HEK293 (cell line): ENCODE measurements at regions of chr17 and their contacts with region 1.

Region 1: GRCh38 chr17:39547713-39548478 is 59.8 kb downstream of the NEUROD2 start:
- H3K4me3 ChIP-seq: no peak overlapping the region
- H3K27ac ChIP-seq: no peak overlapping the region
- H3K4me1 ChIP-seq: no peaks in the 10 kb centered on the region
- CTCF ChIP-seq: peak; percentile 95

Region 2: DNA sequence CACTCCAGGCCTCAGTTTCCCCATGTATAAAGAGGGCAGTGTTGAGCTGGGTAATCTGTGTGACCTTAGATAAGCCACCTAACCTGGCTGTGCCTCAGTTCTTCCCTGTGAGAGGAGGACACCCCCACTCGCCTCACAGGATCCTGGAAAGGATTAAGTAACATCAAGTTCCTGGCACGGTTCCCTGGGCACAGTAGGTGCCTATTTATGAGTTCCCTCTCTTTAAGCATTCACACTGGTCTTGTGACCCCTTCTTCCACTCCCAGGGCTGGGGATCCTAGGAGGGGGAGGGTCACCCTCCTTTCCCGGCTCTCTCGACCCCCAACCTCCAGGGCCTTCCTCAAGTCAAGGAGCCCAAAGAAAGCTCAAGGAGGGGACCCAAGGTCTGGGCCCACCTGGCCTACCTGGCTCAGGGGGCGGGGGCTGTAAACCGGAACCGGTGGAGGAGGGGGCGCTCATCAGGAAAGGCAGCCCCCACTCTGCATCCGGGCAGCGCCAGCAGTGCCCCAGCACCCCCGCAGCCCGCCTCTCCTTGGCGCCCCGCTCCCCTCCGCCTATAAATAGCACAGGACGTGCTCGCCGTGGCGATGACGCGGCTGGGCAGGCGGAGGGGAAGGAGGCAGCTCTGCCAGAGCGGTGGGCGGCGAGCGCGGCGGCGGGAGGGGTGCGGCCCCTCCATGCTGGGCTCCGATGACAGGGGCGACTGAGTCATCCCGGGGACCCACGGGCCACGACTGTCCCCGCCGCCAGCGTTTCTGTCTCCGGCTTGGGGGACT is 338.4 kb before region 1 on chr17:
- CTCF ChIA-PET with region 1: interaction called, 11 read pairs
- POLR2A ChIA-PET with region 1: no interaction called
- H3K4me3 ChIP-seq: peak overlapping the region; percentile 13
- H3K27ac ChIP-seq: peak overlapping the region; percentile 28; the same call in 1 of the 2 replicates
- H3K4me1 ChIP-seq: peaks cover 16% of the 10 kb centered on the region
- CTCF ChIP-seq: no peak

Region 3: DNA sequence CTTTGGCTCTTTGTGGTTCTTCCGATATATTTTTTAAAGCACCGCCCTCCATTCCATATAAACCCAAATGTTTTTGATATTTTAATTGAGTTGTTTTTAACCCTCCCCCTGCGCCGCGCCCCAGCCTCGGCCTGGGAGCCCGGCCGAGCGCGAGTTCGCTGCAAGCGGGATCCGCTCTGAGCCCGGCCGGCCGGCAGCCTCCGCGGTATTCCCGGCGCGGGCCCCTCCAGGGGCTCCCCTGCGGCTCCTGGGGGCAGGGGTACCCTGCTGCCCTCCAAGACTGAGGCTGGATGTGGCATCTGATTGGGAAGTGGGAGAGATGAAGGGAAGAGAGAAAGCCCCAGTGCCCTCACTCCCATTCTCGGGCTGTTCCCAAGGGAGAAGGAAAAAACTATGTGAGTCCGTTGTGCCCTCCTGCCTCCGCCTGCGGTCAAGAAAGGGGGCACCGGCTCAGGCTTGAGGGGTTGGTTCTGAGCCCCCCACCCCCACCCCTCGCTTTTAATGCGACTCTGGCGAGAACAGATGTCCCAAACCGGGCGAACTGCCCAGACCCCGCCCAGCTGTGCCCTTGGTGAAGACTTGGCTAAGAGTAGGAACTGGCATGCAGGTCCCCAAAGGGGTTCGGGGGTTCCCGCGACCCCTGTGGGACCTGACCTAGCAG is 51.2 kb after region 1 on chr17:
- CTCF ChIA-PET with region 1: interaction called, 11 read pairs
- POLR2A ChIA-PET with region 1: no interaction called
- H3K4me3 ChIP-seq: no peak overlapping the region
- H3K27ac ChIP-seq: no peak overlapping the region
- H3K4me1 ChIP-seq: peaks cover 4% of the 10 kb centered on the region; the same call in 1 of the 2 replicates
- CTCF ChIP-seq: no peak

Region 4: GRCh38 chr17:39653662-39654331 is 105.9 kb after region 1 on chr17:
- CTCF ChIA-PET with region 1: interaction called, 28 read pairs
- POLR2A ChIA-PET with region 1: no interaction called
- H3K4me3 ChIP-seq: no peak overlapping the region
- H3K27ac ChIP-seq: no peak overlapping the region
- H3K4me1 ChIP-seq: peaks cover 2% of the 10 kb centered on the region; the same call in 1 of the 2 replicates
- CTCF ChIP-seq: peak; percentile 64

Region 5: GRCh38 chr17:39716879-39717536 is 169.1 kb after region 1 on chr17:
- CTCF ChIA-PET with region 1: no interaction called
- POLR2A ChIA-PET with region 1: no interaction called
- H3K4me3 ChIP-seq: no peak overlapping the region
- H3K27ac ChIP-seq: no peak overlapping the region
- H3K4me1 ChIP-seq: no peaks in the 10 kb centered on the region
- CTCF ChIP-seq: no peak

Region 6: DNA sequence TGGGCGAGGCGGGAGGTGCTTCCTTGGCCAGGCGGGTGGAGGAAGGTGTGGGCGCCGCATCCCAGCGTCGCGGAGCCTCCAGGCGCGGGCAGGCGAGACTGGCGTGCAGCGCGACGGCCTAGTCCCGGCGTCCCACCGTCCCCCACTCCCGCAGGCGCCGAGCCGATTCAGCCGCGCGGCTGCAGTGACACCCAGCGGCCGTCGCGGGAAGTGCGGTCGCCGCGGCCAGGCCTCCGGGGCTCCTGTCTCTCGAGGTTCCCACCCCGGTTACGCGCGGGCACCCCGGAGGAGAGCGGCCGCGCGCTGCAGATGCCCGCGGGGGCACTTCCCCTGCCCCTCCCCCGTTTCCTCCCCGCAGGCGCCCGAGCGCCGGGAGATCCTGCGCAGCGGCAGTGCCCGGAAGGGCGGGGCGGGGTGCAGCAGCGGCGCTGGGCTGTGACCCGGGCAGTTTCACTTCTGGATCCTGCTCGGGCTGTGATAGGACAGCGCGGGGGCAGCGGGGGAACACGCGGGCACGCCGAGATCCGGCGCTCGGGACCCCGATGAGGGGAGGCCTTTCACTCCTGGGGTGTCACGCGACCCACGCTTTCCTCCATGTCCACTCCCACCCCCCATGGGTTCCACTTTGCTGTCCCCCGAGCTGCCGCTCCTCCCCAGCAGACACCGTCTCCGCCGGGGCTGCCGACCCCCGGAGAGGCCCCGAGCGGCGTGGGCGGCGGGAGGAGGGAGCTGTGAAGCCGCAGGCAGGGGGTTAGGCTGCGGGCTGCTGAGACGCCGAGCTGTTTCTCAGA is 206.5 kb after region 1 on chr17:
- CTCF ChIA-PET with region 1: interaction called, 12 read pairs
- POLR2A ChIA-PET with region 1: interaction called, 4 read pairs
- H3K4me3 ChIP-seq: peak overlapping the region; percentile 50
- H3K27ac ChIP-seq: peak overlapping the region; percentile 87
- H3K4me1 ChIP-seq: peaks cover 4% of the 10 kb centered on the region; the same call in 1 of the 2 replicates
- CTCF ChIP-seq: peak; percentile 95

Region 7: GRCh38 chr17:40190197-40191021 is 642.5 kb after region 1 on chr17:
- CTCF ChIA-PET with region 1: no interaction called
- POLR2A ChIA-PET with region 1: no interaction called
- H3K4me3 ChIP-seq: no peak overlapping the region
- H3K27ac ChIP-seq: no peak overlapping the region
- H3K4me1 ChIP-seq: peaks cover 6% of the 10 kb centered on the region
- CTCF ChIP-seq: peak; percentile 93